MCF 10A (cell line): ENCODE measurements at regions of chr5 and their contacts with region 1.

Region 1: GRCh38 chr5:151252762-151253604 is at the start of gene GM2A:
- DNase-seq: peak; percentile 100
- H3K4me3 Mint-ChIP-seq: peak within 1 kb of the TSS; percentile 79
- H3K27ac Mint-ChIP-seq: peak within 1 kb of the TSS; percentile 10
- H3K4me1 Mint-ChIP-seq: peaks cover 21% of the 10 kb centered on the region
- H3K27me3 Mint-ChIP-seq: no peaks in the 10 kb centered on the region
- CTCF ChIP-seq: no peak
- total RNA-seq, gene GM2A: 28.9 and 36.1 TPM in 2 replicates

Region 2: DNA sequence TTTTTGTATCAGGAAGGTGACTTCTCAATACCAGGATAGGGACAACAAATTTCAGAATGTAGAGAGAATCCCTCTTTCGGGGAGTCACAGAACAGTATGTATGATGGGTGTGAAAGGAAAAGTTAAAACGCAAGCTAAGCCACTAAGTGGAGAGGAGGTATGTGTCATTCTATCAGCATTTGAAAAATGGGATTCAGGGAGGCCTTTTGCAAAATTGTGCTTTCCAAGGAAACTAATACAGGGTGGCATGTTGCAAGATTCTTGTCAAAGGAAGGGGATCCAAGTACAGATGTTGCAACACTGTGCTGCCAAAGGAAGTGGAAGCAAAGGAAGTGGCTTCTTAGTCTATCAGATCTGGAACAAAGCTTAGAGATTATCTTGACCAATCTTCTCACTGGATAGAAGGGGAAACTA is 159.5 kb before region 1 on chr5:
- CTCF ChIA-PET with region 1: interaction called, 6 read pairs
- POLR2A ChIA-PET with region 1: interaction called, 11 read pairs
- intact Hi-C with region 1: no loop called
- DNase-seq: peak; percentile 98
- H3K4me3 Mint-ChIP-seq: peak overlapping the region; percentile 28
- H3K27ac Mint-ChIP-seq: peak overlapping the region; percentile 76
- H3K4me1 Mint-ChIP-seq: peaks cover 43% of the 10 kb centered on the region
- H3K27me3 Mint-ChIP-seq: no peaks in the 10 kb centered on the region
- CTCF ChIP-seq: no peak

Region 3: GRCh38 chr5:151223469-151224264 is 29.3 kb before region 1 on chr5 and contains the start of gene CCDC69:
- CTCF ChIA-PET with region 1: interaction called, 3 read pairs
- POLR2A ChIA-PET with region 1: interaction called, 19 read pairs
- intact Hi-C with region 1: no loop called
- DNase-seq: peak; percentile 74
- H3K4me3 Mint-ChIP-seq: peak within 1 kb of the TSS; percentile 84
- H3K27ac Mint-ChIP-seq: peak within 1 kb of the TSS; percentile 75
- H3K4me1 Mint-ChIP-seq: peaks cover 18% of the 10 kb centered on the region
- H3K27me3 Mint-ChIP-seq: no peaks in the 10 kb centered on the region
- CTCF ChIP-seq: no peak
- total RNA-seq, gene CCDC69: 2.8 and 3.0 TPM in 2 replicates

Region 4: GRCh38 chr5:151264113-151264512 is 11.1 kb after region 1 on chr5:
- CTCF ChIA-PET with region 1: interaction called, 9 read pairs
- POLR2A ChIA-PET with region 1: interaction called, 55 read pairs
- intact Hi-C with region 1: no loop called
- DNase-seq: peak; percentile 79
- H3K4me3 Mint-ChIP-seq: peak overlapping the region; percentile 1
- H3K27ac Mint-ChIP-seq: peak overlapping the region; percentile 91
- H3K4me1 Mint-ChIP-seq: peaks cover 20% of the 10 kb centered on the region
- H3K27me3 Mint-ChIP-seq: no peaks in the 10 kb centered on the region
- CTCF ChIP-seq: no peak

Region 5: DNA sequence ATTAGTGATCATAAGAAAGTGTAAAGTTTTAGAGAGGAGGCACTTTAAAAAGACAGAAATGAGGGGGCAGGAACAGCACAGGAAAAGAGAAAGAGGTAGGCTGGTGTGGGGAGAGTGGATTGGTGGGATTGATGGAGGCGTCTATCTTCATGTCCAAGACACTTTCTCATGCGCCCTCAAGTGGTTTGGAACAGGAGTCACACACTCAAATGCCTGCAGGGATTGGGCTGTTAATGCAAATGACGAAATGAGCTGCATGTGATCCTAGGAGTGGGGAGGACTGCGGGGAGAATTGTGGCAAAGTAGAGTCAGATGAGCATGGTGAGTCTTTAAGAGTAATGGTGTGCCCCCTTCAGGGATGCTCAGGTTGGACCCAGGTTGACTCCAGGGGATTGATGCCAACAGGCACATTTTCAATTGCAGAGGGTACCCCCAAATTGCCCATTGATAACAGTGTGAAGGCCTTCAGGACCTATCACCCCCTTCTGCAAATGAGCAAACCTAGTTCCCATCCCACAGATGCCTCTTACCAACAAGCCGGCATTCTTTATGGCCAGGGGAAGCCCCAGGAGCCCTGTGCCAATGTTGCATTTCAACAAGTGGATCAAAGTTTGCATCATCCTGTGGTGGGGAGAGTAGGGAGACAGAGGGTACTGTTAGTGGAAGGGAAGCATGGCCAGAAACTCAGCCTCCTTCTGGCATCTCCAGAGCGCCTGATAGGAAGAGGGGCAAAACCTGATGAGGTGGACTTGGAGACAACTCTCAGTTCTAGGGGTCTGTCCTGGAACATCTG is 45.3 kb after region 1 on chr5:
- CTCF ChIA-PET with region 1: interaction called, 4 read pairs
- POLR2A ChIA-PET with region 1: interaction called, 13 read pairs
- intact Hi-C with region 1: loop called (anchors 5 kb)
- DNase-seq: peak; percentile 90
- H3K4me3 Mint-ChIP-seq: no peak overlapping the region
- H3K27ac Mint-ChIP-seq: no peak overlapping the region
- H3K4me1 Mint-ChIP-seq: peaks cover 23% of the 10 kb centered on the region
- H3K27me3 Mint-ChIP-seq: peaks cover 36% of the 10 kb centered on the region
- CTCF ChIP-seq: peak; percentile 68

Region 6: DNA sequence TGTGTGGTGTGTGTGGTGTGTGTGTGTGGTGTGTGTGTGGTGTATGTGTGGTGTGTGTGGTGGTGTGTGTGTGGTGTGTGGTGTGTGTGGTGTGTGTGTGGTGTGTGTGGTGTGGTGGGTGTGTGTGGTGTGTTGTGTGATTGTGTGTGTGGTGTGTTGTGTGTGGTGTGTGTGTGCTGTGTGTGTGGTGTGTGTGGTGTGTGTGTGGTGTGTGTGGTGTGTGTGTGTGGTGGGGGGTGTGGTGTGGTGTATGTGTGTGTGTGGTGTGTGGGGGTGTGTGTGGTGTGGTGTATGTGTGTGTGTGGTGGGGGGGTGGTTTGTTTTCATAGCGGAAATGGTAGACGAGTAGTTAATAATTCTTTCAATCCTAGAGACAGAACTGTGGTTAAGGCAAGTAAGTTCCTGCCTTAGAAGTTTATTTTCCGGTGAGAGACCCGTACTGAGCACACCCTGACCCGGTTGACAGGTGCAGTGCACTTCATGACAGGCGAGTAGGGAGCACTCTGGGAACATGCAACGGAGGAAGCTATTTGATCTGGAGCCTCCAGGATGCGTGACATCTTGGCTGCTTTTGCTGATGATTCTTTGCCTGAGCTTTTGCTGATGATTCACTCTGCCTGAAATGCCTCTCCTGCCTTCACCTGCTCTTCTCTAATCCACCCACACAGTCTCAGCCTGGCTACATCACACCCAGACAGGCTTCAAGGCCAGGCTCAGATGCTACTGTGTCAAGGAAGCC is 359.9 kb after region 1 on chr5:
- CTCF ChIA-PET with region 1: no interaction called
- POLR2A ChIA-PET with region 1: interaction called, 12 read pairs
- intact Hi-C with region 1: no loop called
- DNase-seq: peak; percentile 93
- H3K4me3 Mint-ChIP-seq: no peak overlapping the region
- H3K27ac Mint-ChIP-seq: peak overlapping the region; percentile 30
- H3K4me1 Mint-ChIP-seq: peaks cover 56% of the 10 kb centered on the region
- H3K27me3 Mint-ChIP-seq: no peaks in the 10 kb centered on the region
- CTCF ChIP-seq: no peak

Region 7: GRCh38 chr5:151771259-151772028 is 518.5 kb after region 1 on chr5 and contains the start of gene G3BP1:
- CTCF ChIA-PET with region 1: no interaction called
- POLR2A ChIA-PET with region 1: interaction called, 11 read pairs
- intact Hi-C with region 1: no loop called
- DNase-seq: peak; percentile 100
- H3K4me3 Mint-ChIP-seq: no peak within 1 kb of the TSS
- H3K27ac Mint-ChIP-seq: no peak within 1 kb of the TSS
- H3K4me1 Mint-ChIP-seq: peaks cover 13% of the 10 kb centered on the region
- H3K27me3 Mint-ChIP-seq: no peaks in the 10 kb centered on the region
- CTCF ChIP-seq: peak; percentile 67
- total RNA-seq, gene G3BP1: 279 and 282 TPM in 2 replicates